HEK293T (cell line): ENCODE measurements at regions of chr1 and their contacts with region 1.

Region 1: DNA sequence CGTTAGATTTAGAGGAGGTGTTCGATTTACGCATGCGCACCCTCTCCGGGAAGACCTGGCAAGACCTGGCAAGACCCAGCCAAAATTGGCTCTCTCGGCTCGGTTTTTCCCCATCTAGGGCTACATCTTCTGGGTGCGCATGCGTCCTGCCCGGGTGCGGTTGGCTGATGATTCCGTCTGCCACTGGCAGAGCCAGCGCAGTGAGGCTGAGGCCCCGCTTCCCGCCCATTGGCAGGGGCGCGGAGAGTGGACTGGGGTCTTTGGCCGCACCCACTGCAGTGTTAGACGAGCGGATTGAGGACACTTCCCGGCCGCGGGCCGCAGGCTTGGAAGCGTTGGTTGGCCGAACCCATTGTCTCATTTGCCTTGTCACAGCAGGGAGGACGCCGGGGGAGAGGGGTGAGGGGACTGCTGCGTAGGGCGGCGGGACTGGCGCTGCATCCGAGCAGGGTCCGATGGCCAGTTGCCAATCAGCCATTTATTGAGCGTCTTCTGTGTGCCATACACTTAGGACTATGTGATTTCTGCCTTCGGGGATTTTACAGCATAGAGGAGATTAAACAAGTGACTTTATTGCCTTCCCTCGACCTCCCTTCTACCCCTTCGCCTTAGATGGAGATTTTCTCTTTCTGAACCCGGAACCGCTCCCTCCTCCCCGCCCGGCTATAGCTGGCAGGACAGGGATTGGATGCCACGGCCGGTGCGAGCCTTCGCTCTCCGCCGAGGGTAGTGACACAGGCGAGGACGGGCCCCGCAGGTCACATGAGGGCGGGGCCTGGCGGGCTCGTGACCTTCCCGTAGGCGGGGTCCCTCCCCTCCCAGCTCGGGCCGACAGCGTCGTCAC is 43.7 kb downstream of the MEF2D start:
- DNase-seq: peak; percentile 97

Region 2: DNA sequence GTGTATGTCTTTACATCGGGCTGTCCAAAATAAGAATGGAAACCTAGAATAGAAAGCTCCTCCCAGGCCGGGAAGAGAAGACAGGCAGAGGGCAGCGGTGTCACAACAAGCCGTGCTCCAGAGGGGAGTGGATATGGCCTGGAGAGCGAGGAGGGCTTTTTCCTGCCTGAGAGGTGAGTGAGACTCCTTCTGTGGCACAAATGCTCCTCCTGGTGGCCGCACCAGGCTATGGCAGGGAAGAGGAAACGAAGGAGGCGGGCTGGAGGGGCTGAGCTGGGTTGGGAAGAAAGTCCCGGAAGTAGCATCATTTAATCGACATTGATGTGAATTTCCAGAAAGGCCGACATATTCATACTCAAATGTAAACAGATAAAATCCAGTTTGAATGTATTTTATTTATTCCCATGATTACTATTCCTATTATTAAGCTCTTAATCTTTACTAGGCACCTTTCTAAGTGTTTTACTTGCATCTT is 11.0 kb before region 1 on chr1:
- CTCF ChIA-PET with region 1: interaction called, 15 read pairs
- POLR2A ChIA-PET with region 1: interaction called, 7 read pairs
- DNase-seq: peak; percentile 92

Region 3: GRCh38 chr1:156489166-156489934 is 32.5 kb after region 1 on chr1:
- CTCF ChIA-PET with region 1: interaction called, 9 read pairs
- POLR2A ChIA-PET with region 1: interaction called, 15 read pairs
- DNase-seq: no peak

Region 4: GRCh38 chr1:156500797-156501499 is 44.1 kb after region 1 on chr1:
- CTCF ChIA-PET with region 1: interaction called, 6 read pairs
- POLR2A ChIA-PET with region 1: interaction called, 64 read pairs
- DNase-seq: peak; percentile 99

Region 5: DNA sequence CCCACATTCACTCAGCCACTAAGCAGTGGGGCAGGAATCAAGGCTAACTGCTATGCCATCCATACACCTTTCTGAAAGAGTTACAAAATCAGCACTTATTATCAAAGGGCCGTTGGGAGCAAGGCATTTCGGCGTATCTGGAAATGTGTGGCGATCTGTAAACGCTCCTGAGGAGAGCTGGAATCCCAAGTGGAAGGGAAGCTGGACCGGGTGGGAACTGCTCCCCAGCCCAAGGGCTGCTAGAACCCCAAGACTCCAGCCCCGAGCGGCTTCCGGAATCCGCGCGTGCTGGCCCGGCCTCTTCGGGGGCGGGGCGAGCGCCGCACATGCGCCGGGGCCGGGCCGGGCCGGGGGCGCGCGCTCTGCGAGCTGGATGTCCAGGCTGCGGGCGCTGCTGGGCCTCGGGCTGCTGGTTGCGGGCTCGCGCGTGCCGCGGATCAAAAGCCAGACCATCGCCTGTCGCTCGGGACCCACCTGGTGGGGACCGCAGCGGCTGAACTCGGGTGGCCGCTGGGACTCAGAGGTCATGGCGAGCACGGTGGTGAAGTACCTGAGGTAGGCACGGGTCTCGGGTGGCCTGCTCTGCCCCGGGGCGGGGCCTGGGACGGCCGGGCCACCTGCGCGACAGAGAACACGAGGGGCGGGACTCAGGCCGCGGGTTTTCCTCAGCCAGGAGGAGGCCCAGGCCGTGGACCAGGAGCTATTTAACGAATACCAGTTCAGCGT is 134.8 kb after region 1 on chr1 and contains the start of gene NAXE:
- CTCF ChIA-PET with region 1: interaction called, 4 read pairs
- POLR2A ChIA-PET with region 1: interaction called, 16 read pairs
- DNase-seq: peak; percentile 87

Region 6: GRCh38 chr1:156652131-156652991 is 195.5 kb after region 1 on chr1:
- CTCF ChIA-PET with region 1: no interaction called
- POLR2A ChIA-PET with region 1: no interaction called
- DNase-seq: no peak